ENCODE measurements at regions of chr4 and their contacts with region 1.

Region 1: GRCh38 chr4:156475322-156475721 is 496.3 kb downstream of the PDGFC start:
- DNase-seq: peak; percentile 42
- ATAC-seq: peak; percentile 73
- H3K4me3 ChIP-seq: no peak overlapping the region
- H3K27ac ChIP-seq: no peak overlapping the region
- H3K4me1 ChIP-seq: peaks cover 0 to 16% of the 10 kb centered on the region in 2 experiments; a peak in 2 of 4 replicates
- H3K27me3 ChIP-seq: no peaks in the 10 kb centered on the region
- CTCF ChIP-seq: peak; percentile 28 to 61 (median 54); a peak in 4 of 6 replicates
- POLR2A ChIP-seq: no peak
- RAD21 ChIP-seq: peak; percentile 86

Region 2: GRCh38 chr4:156132196-156132595 is 343.1 kb before region 1 on chr4:
- CTCF ChIA-PET with region 1: no interaction called
- POLR2A ChIA-PET with region 1: no interaction called
- RAD21 ChIA-PET with region 1: no interaction called
- intact Hi-C with region 1: no loop called
- DNase-seq: no peak
- ATAC-seq: no peak
- H3K4me3 ChIP-seq: no peak overlapping the region
- H3K27ac ChIP-seq: no peak overlapping the region
- H3K4me1 ChIP-seq: no peaks in the 10 kb centered on the region
- H3K27me3 ChIP-seq: no peaks in the 10 kb centered on the region
- CTCF ChIP-seq: no peak
- POLR2A ChIP-seq: no peak
- RAD21 ChIP-seq: no peak

Region 3: GRCh38 chr4:156169011-156169410 is 306.3 kb before region 1 on chr4:
- CTCF ChIA-PET with region 1: no interaction called
- POLR2A ChIA-PET with region 1: no interaction called
- RAD21 ChIA-PET with region 1: no interaction called
- intact Hi-C with region 1: loop called (anchors 10 kb)
- DNase-seq: peak; percentile 19
- ATAC-seq: peak; percentile 81
- H3K4me3 ChIP-seq: no peak overlapping the region
- H3K27ac ChIP-seq: no peak overlapping the region
- H3K4me1 ChIP-seq: no peaks in the 10 kb centered on the region
- H3K27me3 ChIP-seq: no peaks in the 10 kb centered on the region
- CTCF ChIP-seq: peak; percentile 29 to 57 (median 48); a peak in 5 of 6 replicates
- POLR2A ChIP-seq: no peak
- RAD21 ChIP-seq: peak; percentile 70

Region 4: GRCh38 chr4:156968479-156968984 is 493.2 kb after region 1 on chr4:
- CTCF ChIA-PET with region 1: interaction called, 17 read pairs
- POLR2A ChIA-PET with region 1: interaction called, 6 read pairs
- RAD21 ChIA-PET with region 1: interaction called in 1 of 2 experiments, 5 read pairs
- intact Hi-C with region 1: loop called (anchors 1 kb)
- DNase-seq: peak; percentile 62
- ATAC-seq: peak; percentile 52
- H3K4me3 ChIP-seq: no peak overlapping the region
- H3K27ac ChIP-seq: no peak overlapping the region; the same call in 1 of the 2 replicates
- H3K4me1 ChIP-seq: peaks cover 0 to 20% of the 10 kb centered on the region in 2 experiments; a peak in 3 of 4 replicates
- H3K27me3 ChIP-seq: no peaks in the 10 kb centered on the region
- CTCF ChIP-seq: peak; percentile 44 to 82 (median 76); a peak in 5 of 6 replicates
- POLR2A ChIP-seq: no peak
- RAD21 ChIP-seq: peak; percentile 80

Region 5: GRCh38 chr4:157128395-157128794 is 653.1 kb after region 1 on chr4:
- CTCF ChIA-PET with region 1: interaction called, 6 read pairs
- POLR2A ChIA-PET with region 1: no interaction called
- RAD21 ChIA-PET with region 1: no interaction called
- intact Hi-C with region 1: loop called (anchors 2 kb)
- DNase-seq: peak; percentile 15
- ATAC-seq: peak; percentile 85
- H3K4me3 ChIP-seq: no peak overlapping the region
- H3K27ac ChIP-seq: no peak overlapping the region
- H3K4me1 ChIP-seq: no peaks in the 10 kb centered on the region
- H3K27me3 ChIP-seq: no peaks in the 10 kb centered on the region
- CTCF ChIP-seq: peak; percentile 31 to 51 (median 44); a peak in 5 of 6 replicates
- POLR2A ChIP-seq: no peak
- RAD21 ChIP-seq: peak; percentile 77

Region 6: DNA sequence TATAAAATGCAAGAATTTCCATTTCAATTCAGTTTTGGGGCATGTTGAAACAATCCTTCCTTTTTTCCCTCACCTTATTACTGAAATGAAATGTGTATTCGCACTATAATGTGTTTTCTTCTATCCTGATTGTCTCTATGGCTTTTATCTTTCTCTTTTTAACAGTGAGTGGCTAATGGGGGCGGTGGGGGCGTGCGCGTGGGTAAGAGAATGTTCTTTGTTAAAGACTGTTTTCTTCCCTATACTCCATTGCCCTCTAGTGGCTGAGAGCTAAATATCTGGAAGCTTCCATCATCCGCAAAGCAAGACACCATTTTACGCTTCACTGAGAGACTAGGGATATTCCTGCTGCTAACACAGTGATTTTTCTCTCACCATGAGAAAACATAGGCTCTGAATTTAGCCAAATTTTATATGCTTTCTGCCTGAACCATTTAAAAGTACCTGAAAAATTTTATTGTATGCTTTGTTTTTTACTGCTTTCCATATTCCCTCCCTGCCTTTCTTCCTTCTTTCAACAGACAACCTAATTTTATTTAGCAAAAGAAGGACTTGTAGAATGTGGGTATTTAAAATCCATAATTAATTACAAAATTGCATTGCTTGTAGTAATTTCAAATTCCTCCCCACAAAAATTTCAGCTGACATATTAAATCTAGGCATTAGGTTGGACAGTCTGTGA is 1503.5 kb after region 1 on chr4:
- CTCF ChIA-PET with region 1: interaction called, 3 read pairs
- POLR2A ChIA-PET with region 1: no interaction called
- RAD21 ChIA-PET with region 1: no interaction called
- intact Hi-C with region 1: loop called (anchors 5 kb)
- DNase-seq: peak; percentile 66
- ATAC-seq: peak; percentile 99
- H3K4me3 ChIP-seq: peak overlapping the region in 1 of 2 experiments; percentile 36; a peak in 3 of 4 replicates
- H3K27ac ChIP-seq: no peak overlapping the region
- H3K4me1 ChIP-seq: no peaks in the 10 kb centered on the region
- H3K27me3 ChIP-seq: no peaks in the 10 kb centered on the region
- CTCF ChIP-seq: peak; percentile 69 to 88 (median 77)
- POLR2A ChIP-seq: no peak
- RAD21 ChIP-seq: peak; percentile 92

Measured in HCT116 (cell line).